ENCODE measurements at regions of chr20 and their contacts with region 1.

Region 1: DNA sequence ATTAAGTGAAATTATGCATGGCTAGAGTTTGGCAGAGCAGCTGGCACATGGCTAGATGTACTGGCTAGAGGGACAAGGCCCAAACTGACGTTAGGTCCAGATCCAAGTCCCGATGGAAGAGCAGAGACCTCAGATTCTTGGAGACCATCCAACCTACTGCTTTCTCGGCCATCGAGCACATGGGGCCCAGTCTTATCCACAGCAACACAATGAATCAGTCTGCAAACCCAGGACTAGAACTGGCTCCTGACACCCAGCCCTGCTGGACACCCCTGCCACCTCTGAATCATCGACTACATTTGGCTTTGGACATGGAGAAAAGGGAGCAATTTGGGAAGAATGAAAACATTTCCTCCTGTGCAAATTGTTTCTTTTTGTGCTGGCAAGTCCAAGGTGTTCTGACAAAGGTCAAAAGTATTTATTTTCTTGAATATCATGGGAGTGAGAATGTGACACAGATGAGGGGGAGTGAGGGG is 23.9 kb upstream of the YWHAB start:
- DNase-seq: no peak
- ATAC-seq: no peak
- H3K4me3 ChIP-seq: no peak overlapping the region
- H3K27ac ChIP-seq: no peak overlapping the region
- H3K4me1 ChIP-seq: no peaks in the 10 kb centered on the region
- H3K27me3 ChIP-seq: no peaks in the 10 kb centered on the region
- CTCF ChIP-seq: no peak
- POLR2A ChIP-seq: no peak

Region 2: GRCh38 chr20:44683263-44684046 is 178.1 kb before region 1 on chr20:
- intact Hi-C with region 1: loop called in 1 of 2 experiments (anchors 10 kb)
- DNase-seq: peak in 2 of 3 donors; percentile 47 to 60
- ATAC-seq: peak; percentile 81 to 89 (median 86)
- H3K4me3 ChIP-seq: no peak overlapping the region
- H3K27ac ChIP-seq: no peak overlapping the region
- H3K4me1 ChIP-seq: peaks cover 0 to 9% (median 4%) of the 10 kb centered on the region in 4 donors
- H3K27me3 ChIP-seq: no peaks in the 10 kb centered on the region
- CTCF ChIP-seq: peak; percentile 44 to 81 (median 58)
- POLR2A ChIP-seq: no peak

Region 3: GRCh38 chr20:44692932-44693476 is 168.6 kb before region 1 on chr20:
- intact Hi-C with region 1: loop called (anchors 10 kb)
- DNase-seq: peak in 1 of 3 donors; percentile 35
- ATAC-seq: peak; percentile 35 to 89 (median 64)
- H3K4me3 ChIP-seq: no peak overlapping the region
- H3K27ac ChIP-seq: peak overlapping the region in 1 of 3 donors; percentile 31
- H3K4me1 ChIP-seq: no peaks in the 10 kb centered on the region
- H3K27me3 ChIP-seq: no peaks in the 10 kb centered on the region
- CTCF ChIP-seq: no peak
- POLR2A ChIP-seq: no peak

Region 4: GRCh38 chr20:44750081-44750805 is 111.3 kb before region 1 on chr20:
- intact Hi-C with region 1: loop called (anchors 10 kb)
- DNase-seq: no peak
- ATAC-seq: no peak
- H3K4me3 ChIP-seq: no peak overlapping the region
- H3K27ac ChIP-seq: no peak overlapping the region
- H3K4me1 ChIP-seq: peaks cover 0 to 19% (median 4%) of the 10 kb centered on the region in 4 donors
- H3K27me3 ChIP-seq: peaks cover 0 to 4% of the 10 kb centered on the region in 2 donors
- CTCF ChIP-seq: peak in 1 of 4 donors; percentile 8
- POLR2A ChIP-seq: no peak

Measured in right lobe of liver (tissue), 6 donors.